HepG2 (cell line): ENCODE measurements at regions of chr3 and their contacts with region 1.

Region 1: GRCh38 chr3:178518660-178519396 is 17.4 kb upstream of the KCNMB2 start:
- DNase-seq: no peak
- ATAC-seq: no peak
- H3K4me3 ChIP-seq: no peak overlapping the region
- H3K27ac ChIP-seq: no peak overlapping the region
- H3K4me1 ChIP-seq: no peaks in the 10 kb centered on the region
- H3K27me3 ChIP-seq: no peaks in the 10 kb centered on the region
- CTCF ChIP-seq: no peak
- EP300 ChIP-seq: no peak
- POLR2A ChIP-seq: no peak
- RAD21 ChIP-seq: no peak

Region 2: GRCh38 chr3:178538056-178538455 is 19.2 kb after region 1 on chr3:
- CTCF ChIA-PET with region 1: no interaction called
- POLR2A ChIA-PET with region 1: no interaction called
- in situ Hi-C with region 1: no loop called
- intact Hi-C with region 1: loop called (anchors 2 kb)
- DNase-seq: no peak
- ATAC-seq: no peak
- H3K4me3 ChIP-seq: no peak overlapping the region
- H3K27ac ChIP-seq: no peak overlapping the region
- H3K4me1 ChIP-seq: no peaks in the 10 kb centered on the region
- H3K27me3 ChIP-seq: peaks cover 0 to 5% of the 10 kb centered on the region in 2 experiments; a peak in 1 of 5 replicates
- CTCF ChIP-seq: no peak
- EP300 ChIP-seq: no peak
- POLR2A ChIP-seq: no peak
- RAD21 ChIP-seq: no peak

Region 3: DNA sequence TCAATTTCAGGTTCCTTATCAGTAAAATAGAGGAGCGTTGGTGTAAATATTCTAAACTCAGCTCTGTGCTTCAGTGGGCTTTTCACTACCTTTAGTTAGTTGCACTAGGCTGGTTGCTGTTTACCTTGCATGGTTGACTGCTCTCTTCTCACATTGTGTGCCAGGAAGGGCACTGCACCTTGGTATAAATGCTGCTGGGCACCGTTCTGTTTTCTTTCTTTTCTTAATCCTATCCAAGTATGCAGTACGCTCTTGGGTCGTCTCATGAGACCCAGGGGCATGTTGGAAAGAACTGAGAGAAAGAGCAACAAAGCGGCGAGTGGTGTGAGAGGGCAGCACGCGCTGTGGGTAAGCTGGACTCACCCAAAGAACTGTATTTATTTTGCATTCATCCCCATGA is 39.8 kb after region 1 on chr3:
- CTCF ChIA-PET with region 1: no interaction called
- POLR2A ChIA-PET with region 1: no interaction called
- in situ Hi-C with region 1: no loop called
- intact Hi-C with region 1: loop called (anchors 1 kb)
- DNase-seq: no peak
- ATAC-seq: no peak
- H3K4me3 ChIP-seq: no peak overlapping the region
- H3K27ac ChIP-seq: no peak overlapping the region
- H3K4me1 ChIP-seq: no peaks in the 10 kb centered on the region
- H3K27me3 ChIP-seq: no peaks in the 10 kb centered on the region
- CTCF ChIP-seq: no peak
- EP300 ChIP-seq: no peak
- POLR2A ChIP-seq: no peak
- RAD21 ChIP-seq: no peak

Region 4: DNA sequence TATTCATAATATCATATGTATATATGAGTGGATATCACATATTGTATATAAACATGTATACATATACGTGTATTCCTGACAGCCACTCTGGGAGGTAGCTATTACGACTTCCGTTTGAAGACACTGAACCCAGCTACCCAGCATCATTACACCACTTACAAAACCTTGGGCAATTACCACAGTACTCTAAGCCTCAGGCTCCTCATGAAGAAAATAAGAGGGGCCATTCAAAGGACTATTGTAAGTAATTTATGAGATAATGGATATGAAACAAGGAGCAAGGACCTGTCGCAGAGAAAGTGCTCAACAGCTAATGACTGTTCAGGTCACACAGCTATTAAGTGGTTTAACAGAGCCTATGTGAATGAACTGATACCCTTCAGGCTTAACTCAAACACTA is 69.8 kb after region 1 on chr3:
- CTCF ChIA-PET with region 1: no interaction called
- POLR2A ChIA-PET with region 1: no interaction called
- in situ Hi-C with region 1: no loop called
- intact Hi-C with region 1: no loop called
- DNase-seq: no peak
- ATAC-seq: no peak
- H3K4me3 ChIP-seq: no peak overlapping the region
- H3K27ac ChIP-seq: no peak overlapping the region
- H3K4me1 ChIP-seq: no peaks in the 10 kb centered on the region
- H3K27me3 ChIP-seq: no peaks in the 10 kb centered on the region
- CTCF ChIP-seq: no peak
- EP300 ChIP-seq: no peak
- POLR2A ChIP-seq: no peak
- RAD21 ChIP-seq: no peak